ENCODE measurements at regions of chr1 and their contacts with region 1.

Region 1: DNA sequence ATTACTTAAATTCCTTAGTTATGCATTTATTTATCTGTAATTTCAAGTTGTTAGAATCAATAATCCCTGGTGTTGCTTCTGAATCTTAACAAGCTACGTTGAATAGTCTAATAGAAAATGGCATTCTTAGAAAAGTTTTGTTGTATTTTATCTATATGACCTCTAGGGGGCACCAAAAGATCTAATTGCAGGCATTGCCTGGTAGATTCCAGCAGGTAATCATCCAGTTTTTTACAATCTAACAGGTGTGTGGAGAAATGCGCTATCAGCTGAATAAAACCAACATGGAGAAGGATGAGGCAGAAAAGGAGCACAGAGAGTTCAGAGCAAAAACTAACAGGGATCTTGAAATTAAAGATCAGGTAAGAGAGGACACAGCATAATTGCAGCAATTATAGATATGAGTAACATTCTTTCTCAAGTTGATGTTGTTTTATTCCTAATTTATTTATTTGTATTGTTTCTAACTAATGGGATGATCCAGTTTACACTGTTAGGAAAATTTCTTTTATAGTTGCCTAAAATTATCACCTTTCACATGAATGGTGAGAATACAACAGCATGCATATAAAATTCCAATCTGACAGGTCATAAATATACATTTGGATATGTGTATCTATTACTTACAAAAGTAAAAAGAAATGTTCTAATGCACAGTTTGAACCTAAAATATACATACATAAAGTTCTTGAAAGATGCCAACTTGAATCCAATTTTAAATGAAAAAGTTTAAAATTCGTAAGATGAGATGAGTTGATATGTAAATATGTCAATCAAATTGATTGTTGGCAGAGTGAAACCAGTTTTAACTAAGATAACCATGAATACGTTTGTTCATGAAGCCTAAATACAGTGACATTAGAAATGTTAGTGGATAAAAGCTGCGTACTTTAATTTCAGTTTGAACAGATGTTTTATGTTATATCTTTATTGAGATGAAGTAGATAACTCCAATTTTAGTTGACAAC is 88.4 kb downstream of the SDCCAG8 start:
- DNase-seq: no peak
- H3K4me3 ChIP-seq: no peak overlapping the region
- H3K27ac ChIP-seq: no peak overlapping the region
- H3K4me1 ChIP-seq: no peaks in the 10 kb centered on the region
- H3K27me3 ChIP-seq: no peaks in the 10 kb centered on the region
- CTCF ChIP-seq: peak; percentile 66 to 74 (median 71)
- EP300 ChIP-seq: no peak
- POLR2A ChIP-seq: no peak

Region 2: DNA sequence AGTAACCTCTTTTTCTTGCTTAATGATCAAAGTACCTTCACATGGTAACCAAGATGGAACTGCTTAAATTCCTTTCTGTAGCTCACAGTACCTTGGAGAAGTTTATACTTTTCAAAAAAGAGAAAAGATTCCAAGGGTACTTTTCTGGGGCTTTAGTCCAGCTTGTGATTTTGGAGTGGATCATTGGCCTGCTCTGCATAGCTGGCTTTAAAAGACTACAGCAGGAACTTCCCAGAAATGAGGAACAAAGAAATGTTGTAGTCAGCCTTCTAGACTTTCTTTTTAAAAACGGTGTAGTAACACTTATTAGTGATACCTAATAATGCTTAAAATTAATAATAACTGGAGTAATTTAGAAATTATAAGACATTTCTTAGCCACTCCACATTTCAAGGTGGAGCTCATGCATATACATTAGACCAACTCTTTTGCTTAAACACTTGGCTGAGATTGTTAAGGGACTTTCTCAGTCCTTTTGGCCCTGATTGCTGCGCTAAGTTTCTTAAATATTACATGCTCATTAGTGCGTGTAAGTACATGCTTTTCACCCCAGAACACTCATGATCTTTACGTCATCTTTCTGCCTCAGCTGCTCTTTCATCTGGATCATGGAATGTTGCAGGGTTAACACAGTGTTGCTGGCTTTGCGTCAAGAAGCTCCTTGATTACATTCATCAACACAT is 31.2 kb before region 1 on chr1:
- intact Hi-C with region 1: no loop called
- DNase-seq: no peak
- H3K4me3 ChIP-seq: no peak overlapping the region
- H3K27ac ChIP-seq: no peak overlapping the region
- H3K4me1 ChIP-seq: no peaks in the 10 kb centered on the region
- H3K27me3 ChIP-seq: no peaks in the 10 kb centered on the region
- CTCF ChIP-seq: no peak
- EP300 ChIP-seq: no peak
- POLR2A ChIP-seq: no peak

Region 3: DNA sequence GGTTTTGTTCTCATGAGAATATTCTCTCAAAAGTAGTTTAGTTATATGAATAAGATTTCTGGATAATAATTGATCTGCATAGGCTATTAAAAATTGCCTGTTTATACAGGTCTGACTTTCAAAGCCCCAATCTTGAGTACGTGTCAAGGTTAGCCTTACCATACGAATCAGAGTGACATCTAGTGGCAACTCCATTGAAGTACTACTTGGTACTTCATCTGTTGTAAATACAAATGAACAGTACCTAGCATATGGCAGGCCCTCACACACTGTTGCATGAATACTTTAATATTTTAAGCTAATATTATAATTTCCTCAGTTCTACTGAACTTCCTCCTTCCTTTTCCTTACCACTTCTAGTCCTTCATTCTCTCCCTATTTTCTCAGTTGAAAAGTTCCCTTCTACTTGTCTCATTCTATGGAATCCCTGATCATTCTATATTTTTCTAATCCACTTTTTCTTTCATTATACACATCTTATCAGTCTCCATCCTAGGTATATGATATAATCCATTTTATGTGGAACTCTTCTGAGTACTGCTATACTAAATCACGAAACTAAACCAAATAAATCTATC is 404.5 kb after region 1 on chr1:
- intact Hi-C with region 1: loop called in 1 of 4 experiments (anchors 10 kb)
- DNase-seq: no peak
- H3K4me3 ChIP-seq: no peak overlapping the region
- H3K27ac ChIP-seq: no peak overlapping the region
- H3K4me1 ChIP-seq: peaks cover 5% of the 10 kb centered on the region
- H3K27me3 ChIP-seq: no peaks in the 10 kb centered on the region
- CTCF ChIP-seq: peak; percentile 53 to 68 (median 59)
- EP300 ChIP-seq: no peak
- POLR2A ChIP-seq: no peak

Region 4: DNA sequence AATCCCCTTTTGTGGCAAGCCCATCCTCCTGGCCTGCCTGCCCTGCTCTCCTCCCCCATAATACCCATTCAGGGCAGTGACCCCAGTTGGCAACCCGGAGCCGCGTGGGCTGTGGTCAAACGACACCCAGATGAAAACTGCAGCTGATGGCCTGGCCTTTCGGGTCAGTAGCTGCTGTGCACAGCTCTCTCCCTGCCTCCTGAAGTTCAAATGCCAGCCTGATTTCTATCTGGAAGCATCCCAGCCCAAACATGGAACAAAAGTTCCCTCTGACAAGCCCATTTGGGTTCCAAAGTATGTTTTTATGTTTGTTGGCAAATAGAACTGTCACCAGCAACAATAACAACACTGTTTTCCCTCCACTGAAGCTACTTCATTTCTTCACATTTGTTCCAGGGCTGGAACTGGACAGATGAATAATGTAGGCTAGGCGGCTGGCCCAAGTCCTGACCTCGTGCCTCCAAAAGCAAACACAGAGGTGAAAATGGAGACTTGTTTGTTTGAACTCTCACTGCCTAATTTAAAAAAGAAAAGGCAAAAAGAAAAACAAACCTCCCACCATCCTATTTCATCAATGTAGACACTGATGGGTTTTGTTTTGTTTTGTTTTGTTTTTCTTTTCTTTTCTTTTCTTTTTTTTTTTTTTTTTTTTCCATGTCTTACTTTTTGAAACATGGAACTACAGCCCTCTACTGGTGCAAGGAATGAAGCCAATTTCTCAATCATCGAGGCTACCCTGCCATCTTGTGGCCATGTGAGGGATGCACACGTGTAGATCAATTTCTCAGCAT is 928.4 kb after region 1 on chr1:
- intact Hi-C with region 1: loop called (anchors 5 to 10 kb)
- DNase-seq: peak; percentile 42 to 80 (median 78)
- H3K4me3 ChIP-seq: no peak overlapping the region
- H3K27ac ChIP-seq: peak overlapping the region; percentile 5 to 65
- H3K4me1 ChIP-seq: peaks cover 2% of the 10 kb centered on the region
- H3K27me3 ChIP-seq: no peaks in the 10 kb centered on the region
- CTCF ChIP-seq: peak; percentile 54 to 94 (median 91)
- EP300 ChIP-seq: no peak
- POLR2A ChIP-seq: no peak